ENCODE measurements at regions of chr17 and their contacts with region 1.

Region 1: DNA sequence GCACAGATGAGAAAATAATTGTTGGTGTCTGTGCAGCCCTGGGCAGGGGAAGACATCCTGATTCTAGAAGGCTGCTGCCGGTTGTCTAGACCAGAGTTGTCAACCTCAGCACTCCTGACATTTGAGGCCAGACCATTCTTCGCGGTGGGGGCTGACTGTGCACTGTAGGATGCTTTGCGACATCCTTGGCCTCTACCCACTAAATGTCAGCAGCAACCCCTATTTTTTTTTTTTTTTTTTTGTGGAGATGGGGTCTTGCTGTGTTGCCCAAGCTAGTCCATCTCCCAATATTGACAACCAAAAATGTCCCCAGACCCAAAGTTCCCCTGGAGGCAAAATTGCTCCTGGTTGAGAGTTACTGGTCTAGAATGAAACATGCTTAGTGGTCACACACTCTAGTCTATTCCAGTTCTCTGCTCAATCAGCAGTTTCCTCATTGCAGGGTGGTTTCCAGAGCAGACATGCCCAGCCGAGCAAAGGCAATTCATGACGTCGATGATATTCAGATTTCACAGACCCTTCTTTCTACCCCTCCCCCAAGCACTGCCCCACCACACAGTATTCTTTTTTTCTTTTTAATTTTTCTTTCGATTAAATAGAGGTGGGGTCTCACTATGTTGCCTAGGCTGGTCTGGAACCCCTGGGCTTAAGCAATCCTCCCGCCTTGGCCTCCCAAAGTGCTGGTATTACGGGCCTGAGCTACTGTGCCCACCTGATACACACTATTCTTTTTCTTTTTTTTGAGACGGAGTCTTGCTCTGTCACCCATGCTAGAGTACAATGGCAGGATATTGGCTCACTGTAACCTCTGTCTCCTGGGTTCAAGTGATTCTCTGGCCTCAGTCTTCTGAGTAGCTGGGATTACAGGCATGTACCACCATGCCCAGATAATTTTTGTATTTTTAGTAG is 9.0 kb downstream of the C17orf99 start:
- DNase-seq: no peak
- ATAC-seq: peak; percentile 74
- H3K4me3 Mint-ChIP-seq: peak overlapping the region; percentile 72
- H3K27ac Mint-ChIP-seq: peak overlapping the region; percentile 97
- H3K4me1 Mint-ChIP-seq: peaks cover 82% of the 10 kb centered on the region
- H3K27me3 Mint-ChIP-seq: no peaks in the 10 kb centered on the region
- CTCF ChIP-seq: no peak

Region 2: DNA sequence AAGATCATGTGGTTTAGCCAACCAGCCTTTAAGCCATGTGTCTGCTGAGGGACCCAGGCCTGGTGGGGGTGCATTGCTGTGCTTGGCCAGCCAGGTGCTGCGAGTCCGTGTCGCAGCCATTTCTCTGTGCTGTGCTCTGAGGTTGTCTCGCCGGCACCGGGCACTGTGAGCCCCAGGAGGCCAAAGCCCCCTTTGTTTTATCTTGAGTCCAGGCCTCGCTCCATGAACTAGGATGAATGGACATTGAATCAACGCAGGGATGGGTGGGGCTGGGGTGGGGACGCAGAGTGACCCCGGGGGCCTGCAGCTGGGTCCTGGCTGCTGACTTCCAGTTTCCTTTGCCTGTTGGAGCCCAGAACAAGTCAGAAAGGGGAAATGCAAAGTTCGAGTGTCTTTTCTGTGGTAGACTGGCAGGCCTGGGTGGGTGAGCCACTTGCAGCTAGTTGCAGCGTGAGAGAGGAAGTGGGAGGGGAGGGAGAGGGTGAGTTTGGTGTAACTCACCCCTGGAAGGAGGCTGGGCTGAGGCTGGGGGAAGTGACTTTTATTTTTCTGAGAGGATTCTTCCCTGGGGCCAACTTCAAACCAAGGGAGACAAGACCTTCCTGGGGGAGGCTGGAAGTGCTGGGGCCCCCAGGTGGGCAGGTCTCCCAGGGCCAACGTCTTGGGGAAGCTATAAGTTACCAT is 689.7 kb before region 1 on chr17:
- CTCF ChIA-PET with region 1: no interaction called
- POLR2A ChIA-PET with region 1: interaction called, 12 read pairs
- intact Hi-C with region 1: loop called (anchors 10 kb)
- DNase-seq: peak; percentile 62
- ATAC-seq: peak; percentile 81
- H3K4me3 Mint-ChIP-seq: peak overlapping the region; percentile 75
- H3K27ac Mint-ChIP-seq: peak overlapping the region; percentile 93
- H3K4me1 Mint-ChIP-seq: peaks cover 94% of the 10 kb centered on the region
- H3K27me3 Mint-ChIP-seq: no peaks in the 10 kb centered on the region
- CTCF ChIP-seq: no peak

Region 3: GRCh38 chr17:77741109-77741508 is 414.0 kb before region 1 on chr17:
- CTCF ChIA-PET with region 1: no interaction called
- POLR2A ChIA-PET with region 1: no interaction called
- intact Hi-C with region 1: no loop called
- DNase-seq: no peak
- ATAC-seq: no peak
- H3K4me3 Mint-ChIP-seq: no peak overlapping the region
- H3K27ac Mint-ChIP-seq: no peak overlapping the region
- H3K4me1 Mint-ChIP-seq: no peaks in the 10 kb centered on the region
- H3K27me3 Mint-ChIP-seq: peaks cover 13% of the 10 kb centered on the region
- CTCF ChIP-seq: no peak

Region 4: GRCh38 chr17:78128551-78129350 is 26.4 kb before region 1 on chr17 and contains the start of gene TMC6:
- CTCF ChIA-PET with region 1: no interaction called
- POLR2A ChIA-PET with region 1: interaction called, 2,404 read pairs
- intact Hi-C with region 1: loop called (anchors 1 kb)
- DNase-seq: peak; percentile 66
- ATAC-seq: peak; percentile 17
- H3K4me3 Mint-ChIP-seq: peak within 1 kb of the TSS; percentile 92
- H3K27ac Mint-ChIP-seq: peak within 1 kb of the TSS; percentile 93
- H3K4me1 Mint-ChIP-seq: peaks cover 74% of the 10 kb centered on the region
- H3K27me3 Mint-ChIP-seq: no peaks in the 10 kb centered on the region
- CTCF ChIP-seq: no peak
- total RNA-seq, gene TMC6: 746 and 896 TPM in 2 replicates

Region 5: DNA sequence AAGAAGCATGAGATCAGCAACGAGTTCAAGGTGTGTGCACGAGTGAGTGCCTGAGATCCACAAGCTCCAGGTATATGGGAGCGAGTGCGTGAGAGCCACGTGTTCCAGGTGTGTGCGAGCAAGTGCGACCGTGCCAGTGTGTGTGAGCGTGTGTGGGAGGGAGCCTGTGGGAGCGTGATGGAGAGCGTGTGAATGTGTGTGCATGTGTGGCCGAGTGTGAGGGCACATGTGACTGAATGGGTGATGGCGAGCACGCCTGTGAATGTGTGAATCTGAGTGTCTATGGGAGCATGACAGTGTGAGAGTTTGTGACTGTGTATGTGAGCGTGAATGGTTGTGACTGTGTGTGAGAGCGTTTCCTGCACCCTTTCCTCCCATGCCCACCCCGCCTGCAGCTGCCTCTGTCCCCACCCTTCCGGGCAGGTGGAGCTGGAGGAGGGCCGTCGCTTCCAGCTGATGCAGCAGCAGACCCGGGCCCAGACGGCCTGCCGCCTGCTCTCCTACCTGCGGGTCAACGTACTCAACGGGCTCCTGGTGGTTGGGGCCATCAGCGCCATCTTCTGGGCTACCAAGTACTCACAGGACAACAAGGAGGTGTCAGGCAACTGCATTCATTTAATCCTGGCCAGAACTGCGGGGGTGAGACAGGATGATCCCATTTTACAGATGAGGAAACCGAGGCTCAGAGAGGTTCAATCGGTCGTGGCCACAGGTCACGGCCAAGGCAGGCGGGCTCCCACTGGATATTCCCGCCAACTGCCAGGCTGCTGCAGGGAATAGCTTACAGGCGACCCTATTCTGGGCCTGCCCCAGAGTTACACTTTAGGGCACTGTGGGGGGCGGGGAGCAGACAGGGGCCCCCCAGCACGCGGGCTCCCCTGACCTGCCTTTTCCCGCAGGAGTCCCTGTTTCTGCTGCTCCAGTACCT is 20.9 kb before region 1 on chr17:
- CTCF ChIA-PET with region 1: interaction called, 3 read pairs
- POLR2A ChIA-PET with region 1: interaction called, 2,404 read pairs
- intact Hi-C with region 1: loop called (anchors 1 kb)
- DNase-seq: peak; percentile 59
- ATAC-seq: peak; percentile 15
- H3K4me3 Mint-ChIP-seq: peak overlapping the region; percentile 95
- H3K27ac Mint-ChIP-seq: peak overlapping the region; percentile 81
- H3K4me1 Mint-ChIP-seq: peaks cover 87% of the 10 kb centered on the region
- H3K27me3 Mint-ChIP-seq: no peaks in the 10 kb centered on the region
- CTCF ChIP-seq: peak; percentile 69